ENCODE measurements at regions of chr11 and their contacts with region 1.

Region 1: DNA sequence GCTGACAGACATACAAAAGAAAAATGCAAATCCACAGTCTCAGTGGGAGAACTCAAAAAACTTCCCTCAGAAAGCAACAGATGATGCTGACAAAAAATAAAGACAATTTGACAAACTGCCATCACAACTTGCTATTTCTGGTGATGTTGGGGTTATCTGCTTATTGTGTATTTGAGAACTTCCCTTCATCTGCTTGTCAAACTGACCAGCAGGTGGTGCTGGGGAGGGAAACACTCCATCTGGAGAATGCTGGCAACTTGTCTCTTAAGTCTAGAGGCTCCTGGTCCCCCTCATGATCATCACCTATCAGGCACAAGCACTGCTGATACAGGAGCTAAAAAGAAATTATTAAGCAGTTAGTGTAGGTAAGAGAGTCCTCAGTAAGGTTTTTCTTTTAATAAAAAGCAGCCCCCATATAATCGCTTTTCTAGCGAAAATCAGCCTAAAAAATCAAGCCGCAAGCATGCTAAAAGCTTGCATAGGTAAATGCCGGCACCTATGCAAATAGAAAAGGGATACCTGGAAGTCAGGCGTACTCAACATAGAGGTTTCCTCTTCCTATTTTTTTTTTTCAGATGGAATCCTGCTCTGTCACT is 9.8 kb upstream of the FAM111B start:
- DNase-seq: peak; percentile 67
- ATAC-seq: peak; percentile 48

Region 2: DNA sequence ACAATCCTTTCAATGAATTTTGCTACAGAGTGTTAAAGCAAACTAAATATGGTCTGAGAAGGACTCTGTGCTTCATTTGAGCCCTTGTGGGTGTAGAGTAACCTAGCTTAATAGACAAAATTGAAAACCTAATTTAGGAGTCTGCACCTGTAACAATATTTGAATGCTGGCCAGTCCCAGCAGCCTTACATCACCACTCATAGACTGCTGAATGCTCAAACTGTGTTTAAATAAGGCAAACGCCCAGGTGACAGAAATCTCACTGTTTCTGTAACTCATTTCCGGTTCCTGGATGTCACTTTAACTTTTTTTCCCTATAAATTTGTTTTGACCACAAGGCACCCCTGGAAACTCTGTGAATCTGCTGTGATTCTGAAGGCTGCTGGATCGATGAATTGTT is 56.6 kb before region 1 on chr11:
- intact Hi-C with region 1: no loop called
- DNase-seq: no peak
- ATAC-seq: no peak

Region 3: GRCh38 chr11:59135648-59136461 is 38.6 kb after region 1 on chr11:
- intact Hi-C with region 1: loop called (anchors 5 kb)
- DNase-seq: peak; percentile 92
- ATAC-seq: peak; percentile 88

Region 4: GRCh38 chr11:59158206-59159068 is 61.2 kb after region 1 on chr11:
- intact Hi-C with region 1: loop called (anchors 5 kb)
- DNase-seq: no peak
- ATAC-seq: peak; percentile 83

Measured in Right ventricle myocardium inferior (tissue), 1 donor.